Testis (tissue), 5 donors: ENCODE measurements at regions of chr14 and their contacts with region 1.

Region 1: GRCh38 chr14:75063407-75064213 is at the start of gene ACYP1:
- DNase-seq: peak; percentile 96
- H3K4me3 ChIP-seq: peak within 1 kb of the TSS; percentile 72 to 77
- H3K27ac ChIP-seq: peak within 1 kb of the TSS in 1 of 2 donors; percentile 36
- H3K4me1 ChIP-seq: peaks cover 8% of the 10 kb centered on the region
- H3K27me3 ChIP-seq: no peaks in the 10 kb centered on the region
- CTCF ChIP-seq: no peak
- POLR2A ChIP-seq: no peak
- total RNA-seq, gene ACYP1: 20.1 to 24.4 TPM

Region 2: GRCh38 chr14:74945823-74946682 is 117.6 kb before region 1 on chr14:
- intact Hi-C with region 1: loop called (anchors 10 kb)
- DNase-seq: peak; percentile 78
- H3K4me3 ChIP-seq: no peak overlapping the region
- H3K27ac ChIP-seq: peak overlapping the region in 1 of 2 donors; percentile 23
- H3K4me1 ChIP-seq: peaks cover 9% of the 10 kb centered on the region
- H3K27me3 ChIP-seq: no peaks in the 10 kb centered on the region
- CTCF ChIP-seq: peak; percentile 79 to 90 (median 83)
- POLR2A ChIP-seq: no peak